Mammary epithelial cell (primary cell): ENCODE measurements at regions of chr3 and their contacts with region 1.

Region 1: GRCh38 chr3:45199837-45200648 is 26.0 kb downstream of the TMEM158 start:
- DNase-seq: peak; percentile 99
- H3K4me3 ChIP-seq: no peak overlapping the region
- H3K27ac ChIP-seq: peak overlapping the region; percentile 90
- H3K4me1 ChIP-seq: peaks cover 40% of the 10 kb centered on the region
- H3K27me3 ChIP-seq: no peaks in the 10 kb centered on the region
- CTCF ChIP-seq: no peak

Region 2: GRCh38 chr3:45132568-45133211 is 67.4 kb before region 1 on chr3:
- CTCF ChIA-PET with region 1: no interaction called
- dilution Hi-C with region 1: no loop called
- in situ Hi-C with region 1: loop called in 1 of 2 experiments (anchors 10 kb)
- intact Hi-C with region 1: loop called (anchors 1 kb)
- DNase-seq: no peak
- H3K4me3 ChIP-seq: no peak overlapping the region
- H3K27ac ChIP-seq: no peak overlapping the region
- H3K4me1 ChIP-seq: peaks cover 73% of the 10 kb centered on the region
- H3K27me3 ChIP-seq: no peaks in the 10 kb centered on the region
- CTCF ChIP-seq: no peak

Region 3: GRCh38 chr3:45145681-45146614 is 54.1 kb before region 1 on chr3 and contains the start of gene CDCP1:
- CTCF ChIA-PET with region 1: no interaction called
- dilution Hi-C with region 1: no loop called
- in situ Hi-C with region 1: loop called in 1 of 2 experiments (anchors 5 kb)
- intact Hi-C with region 1: loop called (anchors 1 kb)
- DNase-seq: peak; percentile 74
- H3K4me3 ChIP-seq: peak within 1 kb of the TSS; percentile 68 to 98 (median 97)
- H3K27ac ChIP-seq: peak within 1 kb of the TSS; percentile 95
- H3K4me1 ChIP-seq: peaks cover 33% of the 10 kb centered on the region
- H3K27me3 ChIP-seq: no peaks in the 10 kb centered on the region
- CTCF ChIP-seq: no peak
- total RNA-seq, gene CDCP1: 126 to 271 TPM

Region 4: GRCh38 chr3:45167011-45167911 is 32.8 kb before region 1 on chr3:
- CTCF ChIA-PET with region 1: no interaction called
- dilution Hi-C with region 1: no loop called
- in situ Hi-C with region 1: no loop called
- intact Hi-C with region 1: loop called (anchors 1 kb)
- DNase-seq: peak; percentile 98
- H3K4me3 ChIP-seq: no peak overlapping the region
- H3K27ac ChIP-seq: peak overlapping the region; percentile 96
- H3K4me1 ChIP-seq: peaks cover 25% of the 10 kb centered on the region
- H3K27me3 ChIP-seq: no peaks in the 10 kb centered on the region
- CTCF ChIP-seq: no peak

Region 5: GRCh38 chr3:45516829-45517228 is 316.8 kb after region 1 on chr3:
- CTCF ChIA-PET with region 1: no interaction called
- dilution Hi-C with region 1: no loop called
- in situ Hi-C with region 1: no loop called
- intact Hi-C with region 1: no loop called
- DNase-seq: no peak
- H3K4me3 ChIP-seq: no peak overlapping the region
- H3K27ac ChIP-seq: no peak overlapping the region
- H3K4me1 ChIP-seq: no peaks in the 10 kb centered on the region
- H3K27me3 ChIP-seq: no peaks in the 10 kb centered on the region
- CTCF ChIP-seq: no peak